Activated naive CD4-positive, alpha-beta T cell treated with anti-CD3 and anti-CD28 coated beads, Interleukin-2, amount 10 ng/mL, durations not matched to agents 7 days and 5 days (primary cell): ENCODE measurements at regions of chr14 and their contacts with region 1.

Region 1: DNA sequence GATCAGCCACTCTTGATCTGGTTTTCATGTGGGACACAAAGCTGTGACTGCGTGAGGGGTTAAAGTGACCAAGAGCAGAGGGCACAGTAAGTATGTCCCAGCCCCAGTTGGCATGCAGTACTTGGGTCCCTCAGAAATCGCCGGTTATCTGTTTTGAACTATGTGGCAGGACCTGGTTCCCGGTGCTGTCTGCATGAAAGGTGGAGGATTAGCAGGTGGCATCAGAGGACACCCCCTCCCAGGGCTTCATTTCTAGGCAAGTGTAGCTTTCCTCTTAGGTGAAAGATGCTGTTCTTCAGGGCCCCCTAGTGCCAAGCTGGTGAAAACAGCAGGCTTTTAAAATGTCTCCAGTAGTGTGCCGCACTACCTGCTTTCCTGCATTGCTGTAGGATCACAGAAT is 57.1 kb downstream of the ATG14 start:
- DNase-seq: peak; percentile 76
- H3K4me3 Mint-ChIP-seq: no peak overlapping the region
- H3K27ac Mint-ChIP-seq: peak overlapping the region; percentile 88
- H3K4me1 Mint-ChIP-seq: peaks cover 25% of the 10 kb centered on the region
- H3K27me3 Mint-ChIP-seq: no peaks in the 10 kb centered on the region

Region 2: DNA sequence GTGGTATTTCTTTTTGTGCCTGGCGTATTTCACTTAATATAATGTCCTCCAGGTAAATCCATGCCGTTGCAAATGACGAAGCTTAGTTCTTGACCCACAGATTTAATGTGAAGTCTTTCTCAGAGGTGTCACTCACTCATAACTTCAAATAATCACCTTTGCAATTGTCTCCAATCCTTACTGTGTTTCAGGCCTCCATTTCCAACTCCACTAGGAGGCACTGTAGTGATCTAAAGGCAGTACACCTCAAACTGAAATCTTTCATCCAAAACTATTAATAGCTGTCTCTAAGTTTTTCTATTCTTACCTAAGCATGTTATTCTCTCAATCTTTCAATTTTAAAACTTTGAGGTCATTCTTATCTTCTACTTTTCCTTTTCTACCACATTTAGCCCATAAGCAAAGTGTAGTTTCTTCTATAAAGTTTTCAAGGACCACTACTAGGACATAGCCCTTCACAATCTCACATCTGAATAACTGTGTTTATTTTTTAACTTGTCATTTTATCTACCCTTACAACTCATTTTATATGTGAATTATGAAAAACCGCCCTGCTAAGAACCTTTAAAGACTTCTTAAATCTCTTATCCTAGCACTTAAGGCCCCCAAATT is 108.7 kb before region 1 on chr14:
- CTCF ChIA-PET with region 1: interaction called, 43 read pairs
- DNase-seq: peak; percentile 47
- H3K4me3 Mint-ChIP-seq: no peak overlapping the region
- H3K27ac Mint-ChIP-seq: no peak overlapping the region
- H3K4me1 Mint-ChIP-seq: no peaks in the 10 kb centered on the region
- H3K27me3 Mint-ChIP-seq: peaks cover 37% of the 10 kb centered on the region

Region 3: DNA sequence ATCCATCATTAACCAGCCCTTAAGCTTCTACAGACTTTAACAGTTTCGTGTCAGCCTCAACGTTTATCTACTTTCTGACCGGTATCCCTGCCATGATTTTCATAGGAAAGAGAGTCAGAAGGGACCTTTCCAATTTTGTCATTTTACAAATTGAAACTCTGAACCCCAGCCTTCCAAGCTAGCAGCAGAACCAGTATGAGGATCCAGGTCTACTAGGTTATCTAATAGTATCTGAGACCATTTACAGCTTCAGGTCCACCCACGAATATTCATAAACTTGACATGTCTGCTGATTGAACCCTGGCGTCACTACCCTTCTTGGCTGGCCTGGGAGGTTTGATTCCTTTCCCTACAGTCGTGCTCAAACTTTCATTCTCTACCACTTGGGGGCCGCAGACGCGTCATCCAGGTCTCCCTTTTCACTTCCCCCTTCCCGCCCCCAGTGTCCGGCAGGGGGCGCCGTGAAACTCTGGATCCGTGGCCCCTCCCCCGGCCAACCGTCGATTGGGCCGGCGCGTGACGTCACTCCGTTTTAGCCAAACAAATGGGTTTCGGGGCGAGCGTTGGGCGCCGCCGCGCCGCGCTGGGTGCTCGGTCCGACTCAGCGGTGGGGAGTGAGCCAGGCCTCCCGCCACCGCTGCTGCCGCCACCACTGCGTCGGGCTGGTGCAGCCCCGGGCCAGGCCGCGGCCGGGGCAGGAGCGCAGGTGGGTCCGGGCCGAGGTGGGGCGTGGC is 83.5 kb before region 1 on chr14 and contains the start of gene FBXO34:
- CTCF ChIA-PET with region 1: interaction called, 139 read pairs
- DNase-seq: peak; percentile 99
- H3K4me3 Mint-ChIP-seq: peak within 1 kb of the TSS; percentile 85
- H3K27ac Mint-ChIP-seq: peak within 1 kb of the TSS; percentile 94
- H3K4me1 Mint-ChIP-seq: peaks cover 39% of the 10 kb centered on the region
- H3K27me3 Mint-ChIP-seq: peaks cover 6% of the 10 kb centered on the region

Region 4: GRCh38 chr14:55333711-55334485 is 20.6 kb before region 1 on chr14:
- CTCF ChIA-PET with region 1: interaction called, 29 read pairs
- DNase-seq: no peak
- H3K4me3 Mint-ChIP-seq: peak overlapping the region; percentile 54
- H3K27ac Mint-ChIP-seq: peak overlapping the region; percentile 86
- H3K4me1 Mint-ChIP-seq: peaks cover 81% of the 10 kb centered on the region
- H3K27me3 Mint-ChIP-seq: no peaks in the 10 kb centered on the region